Caco-2 (cell line): ENCODE measurements at regions of chr3 and their contacts with region 1.

Region 1: DNA sequence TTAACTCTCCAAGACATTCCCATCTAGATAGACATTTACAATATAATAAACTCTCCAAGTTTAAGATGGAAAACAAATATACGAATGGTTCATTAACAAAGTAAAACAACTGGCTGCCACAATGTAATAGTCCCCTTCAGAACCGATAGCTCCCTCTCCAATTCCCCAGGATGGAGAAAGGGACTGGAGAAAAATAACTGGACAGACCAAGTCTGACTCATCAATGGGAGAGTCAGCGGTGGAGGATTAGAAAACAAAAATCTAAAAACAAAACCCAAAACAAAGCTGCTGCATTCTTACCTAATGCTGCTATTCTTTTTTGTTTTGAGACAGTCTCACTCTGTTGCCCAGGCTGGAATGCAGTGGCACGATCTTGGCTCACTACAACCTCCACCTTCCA is 468.1 kb downstream of the SHQ1 start:
- DNase-seq: no peak
- H3K4me3 ChIP-seq: no peak overlapping the region
- H3K4me3 Mint-ChIP-seq: no peak overlapping the region
- H3K27ac Mint-ChIP-seq: no peak overlapping the region
- H3K4me1 ChIP-seq: peaks cover 46% of the 10 kb centered on the region
- H3K4me1 Mint-ChIP-seq: peaks cover 37% of the 10 kb centered on the region
- H3K27me3 ChIP-seq: no peaks in the 10 kb centered on the region
- H3K27me3 Mint-ChIP-seq: no peaks in the 10 kb centered on the region
- CTCF ChIP-seq: no peak

Region 2: DNA sequence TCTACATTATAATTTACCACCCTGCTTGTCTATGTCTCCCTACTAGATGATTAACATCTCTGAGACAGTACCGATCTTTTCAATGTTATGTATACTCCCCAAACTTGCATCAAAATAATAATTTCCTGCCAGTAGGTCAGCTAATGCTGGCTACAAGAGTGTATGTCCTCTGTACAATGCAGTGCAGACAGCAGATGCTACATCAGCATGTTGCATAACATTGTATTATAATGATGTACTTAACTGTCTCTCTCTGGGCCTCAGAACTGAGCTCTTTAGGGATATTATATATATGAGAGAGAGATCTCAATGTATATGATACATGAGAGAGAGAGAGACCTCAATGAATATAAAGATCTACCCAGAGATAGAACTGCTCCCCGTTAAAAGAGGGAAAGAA is 11.5 kb after region 1 on chr3:
- CTCF ChIA-PET with region 1: no interaction called
- POLR2A ChIA-PET with region 1: no interaction called
- intact Hi-C with region 1: loop called (anchors 1 kb)
- DNase-seq: no peak
- H3K4me3 ChIP-seq: no peak overlapping the region
- H3K4me3 Mint-ChIP-seq: no peak overlapping the region
- H3K27ac Mint-ChIP-seq: no peak overlapping the region
- H3K4me1 ChIP-seq: peaks cover 57% of the 10 kb centered on the region
- H3K4me1 Mint-ChIP-seq: peaks cover 23% of the 10 kb centered on the region
- H3K27me3 ChIP-seq: no peaks in the 10 kb centered on the region
- H3K27me3 Mint-ChIP-seq: no peaks in the 10 kb centered on the region
- CTCF ChIP-seq: no peak

Region 3: GRCh38 chr3:72447059-72447946 is 67.1 kb after region 1 on chr3:
- CTCF ChIA-PET with region 1: no interaction called
- POLR2A ChIA-PET with region 1: no interaction called
- intact Hi-C with region 1: loop called (anchors 5 kb)
- DNase-seq: peak; percentile 88 to 96
- H3K4me3 ChIP-seq: peak overlapping the region; percentile 92
- H3K4me3 Mint-ChIP-seq: peak overlapping the region; percentile 99
- H3K27ac Mint-ChIP-seq: peak overlapping the region; percentile 87
- H3K4me1 ChIP-seq: peaks cover 35% of the 10 kb centered on the region
- H3K4me1 Mint-ChIP-seq: peaks cover 47% of the 10 kb centered on the region
- H3K27me3 ChIP-seq: no peaks in the 10 kb centered on the region
- H3K27me3 Mint-ChIP-seq: no peaks in the 10 kb centered on the region
- CTCF ChIP-seq: no peak

Region 4: GRCh38 chr3:72634128-72634527 is 253.9 kb after region 1 on chr3:
- CTCF ChIA-PET with region 1: no interaction called
- POLR2A ChIA-PET with region 1: no interaction called
- intact Hi-C with region 1: no loop called
- DNase-seq: no peak
- H3K4me3 ChIP-seq: no peak overlapping the region
- H3K4me3 Mint-ChIP-seq: no peak overlapping the region
- H3K27ac Mint-ChIP-seq: no peak overlapping the region
- H3K4me1 ChIP-seq: no peaks in the 10 kb centered on the region; the same call in 1 of the 2 replicates
- H3K4me1 Mint-ChIP-seq: no peaks in the 10 kb centered on the region
- H3K27me3 ChIP-seq: no peaks in the 10 kb centered on the region
- H3K27me3 Mint-ChIP-seq: no peaks in the 10 kb centered on the region
- CTCF ChIP-seq: no peak